H1 (cell line): ENCODE measurements at regions of chr4 and their contacts with region 1.

Region 1: GRCh38 chr4:6681187-6681586 is 12.5 kb upstream of the S100P start:
- DNase-seq: peak in 1 of 2 experiments; percentile 70
- H3K4me3 ChIP-seq: no peak overlapping the region
- H3K27ac ChIP-seq: no peak overlapping the region
- H3K4me1 ChIP-seq: peaks cover 0 to 3% (median under 1%) of the 10 kb centered on the region in 4 experiments; a peak in 2 of 7 replicates
- H3K27me3 ChIP-seq: no peaks in the 10 kb centered on the region
- CTCF ChIP-seq: peak in 2 of 3 experiments; percentile 50 to 54; a peak in 2 of 4 replicates
- EP300 ChIP-seq: no peak
- POLR2A ChIP-seq: no peak
- RAD21 ChIP-seq: peak in 1 of 2 experiments; percentile 6; a peak in 1 of 4 replicates

Region 2: GRCh38 chr4:6695660-6696630 is 14.8 kb after region 1 on chr4:
- CTCF ChIA-PET with region 1: interaction called, 37 read pairs
- POLR2A ChIA-PET with region 1: interaction called, 4 read pairs
- DNase-seq: no peak
- H3K4me3 ChIP-seq: no peak overlapping the region
- H3K27ac ChIP-seq: no peak overlapping the region
- H3K4me1 ChIP-seq: no peaks in the 10 kb centered on the region; a peak in 1 of 7 replicates
- H3K27me3 ChIP-seq: no peaks in the 10 kb centered on the region
- CTCF ChIP-seq: no peak
- EP300 ChIP-seq: no peak
- POLR2A ChIP-seq: no peak
- RAD21 ChIP-seq: peak; percentile 9 to 18; a peak in 1 of 4 replicates

Region 3: DNA sequence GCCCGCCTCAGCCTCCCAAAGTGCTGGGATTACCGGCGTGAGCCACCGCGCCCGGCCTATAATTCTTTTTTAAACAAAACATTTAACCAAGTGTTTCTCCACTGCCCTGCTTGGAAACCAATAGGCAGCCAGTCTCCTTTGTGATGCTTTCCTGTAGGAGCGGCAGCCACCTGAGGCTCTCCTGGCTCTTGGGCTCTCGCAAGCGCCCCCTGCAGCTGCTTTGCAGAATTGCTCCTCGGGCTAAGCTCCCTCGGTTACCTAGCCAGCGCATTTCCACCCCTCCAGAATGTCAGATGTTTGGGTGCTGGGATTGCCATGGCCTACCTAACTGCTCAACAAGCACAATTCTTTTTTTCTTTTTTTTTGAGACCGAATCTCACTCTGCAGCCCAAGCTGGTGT is 20.2 kb after region 1 on chr4:
- CTCF ChIA-PET with region 1: interaction called, 15 read pairs
- POLR2A ChIA-PET with region 1: interaction called, 3 read pairs
- DNase-seq: peak; percentile 73 to 95
- H3K4me3 ChIP-seq: no peak overlapping the region
- H3K27ac ChIP-seq: no peak overlapping the region
- H3K4me1 ChIP-seq: no peaks in the 10 kb centered on the region; a peak in 1 of 7 replicates
- H3K27me3 ChIP-seq: no peaks in the 10 kb centered on the region
- CTCF ChIP-seq: peak; percentile 82 to 94 (median 85)
- EP300 ChIP-seq: no peak
- POLR2A ChIP-seq: no peak
- RAD21 ChIP-seq: peak; percentile 62 to 72